ENCODE measurements at regions of chr17 and their contacts with region 1.

Region 1: DNA sequence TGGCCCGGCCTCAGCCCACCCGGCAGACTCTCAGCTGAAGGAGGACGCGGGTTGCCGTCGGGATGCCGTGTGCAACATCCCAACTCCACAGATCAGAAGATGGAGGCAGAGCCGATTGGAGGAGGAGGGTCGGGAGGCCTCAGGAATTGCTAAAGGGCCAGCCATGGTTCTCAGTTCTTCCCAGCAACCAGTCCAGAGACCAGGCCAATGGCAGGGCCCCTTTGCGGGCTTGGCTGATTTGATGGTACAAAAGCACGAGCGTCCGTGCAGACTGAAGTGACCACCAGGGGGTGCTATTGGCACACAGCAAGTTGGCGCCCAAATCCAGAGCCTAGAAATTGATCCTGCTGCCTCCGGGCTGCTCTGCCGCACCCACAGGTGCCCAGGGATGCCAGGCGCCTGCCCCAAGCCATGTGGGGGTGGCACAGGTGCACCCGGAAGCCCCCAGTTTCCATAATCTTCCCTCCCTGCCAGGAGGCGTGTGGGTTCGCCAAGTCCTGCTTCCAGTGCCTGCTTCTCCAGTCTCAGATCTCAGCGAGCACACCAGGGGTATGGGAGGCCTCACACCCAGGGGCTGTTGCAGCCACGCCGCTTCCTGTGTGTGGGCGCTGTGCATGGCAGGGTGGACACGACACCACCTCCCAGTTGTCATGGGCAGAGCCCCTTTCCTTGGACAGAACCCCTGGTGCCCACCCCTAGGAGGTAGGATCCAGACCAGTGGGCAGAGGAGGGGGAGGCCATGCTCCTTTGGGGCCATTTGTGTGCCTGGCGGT is 7.1 kb upstream of the TEX19 start:
- DNase-seq: no peak
- ATAC-seq: peak; percentile 93
- H3K4me3 ChIP-seq: no peak overlapping the region
- H3K27ac ChIP-seq: no peak overlapping the region
- H3K4me1 ChIP-seq: peaks cover 15% of the 10 kb centered on the region
- H3K27me3 ChIP-seq: no peaks in the 10 kb centered on the region
- CTCF ChIP-seq: peak; percentile 92 to 93 (median 92)
- EP300 ChIP-seq: no peak
- POLR2A ChIP-seq: no peak
- RAD21 ChIP-seq: peak; percentile 86

Region 2: GRCh38 chr17:82315703-82316358 is 36.1 kb before region 1 on chr17:
- CTCF ChIA-PET with region 1: no interaction called
- POLR2A ChIA-PET with region 1: no interaction called
- RAD21 ChIA-PET with region 1: no interaction called
- SMC1A ChIA-PET with region 1: no interaction called
- in situ Hi-C with region 1: no loop called
- intact Hi-C with region 1: no loop called
- DNase-seq: no peak
- ATAC-seq: peak; percentile 56
- H3K4me3 ChIP-seq: no peak overlapping the region
- H3K27ac ChIP-seq: no peak overlapping the region
- H3K4me1 ChIP-seq: no peaks in the 10 kb centered on the region
- H3K27me3 ChIP-seq: peaks cover 0 to 2% of the 10 kb centered on the region in 2 experiments; a peak in 2 of 4 replicates
- CTCF ChIP-seq: no peak
- EP300 ChIP-seq: no peak
- POLR2A ChIP-seq: no peak
- RAD21 ChIP-seq: no peak

Region 3: GRCh38 chr17:82338858-82339633 is 12.9 kb before region 1 on chr17:
- CTCF ChIA-PET with region 1: interaction called, 10 read pairs
- POLR2A ChIA-PET with region 1: no interaction called
- RAD21 ChIA-PET with region 1: interaction called, 3 read pairs
- SMC1A ChIA-PET with region 1: interaction called, 3 read pairs
- in situ Hi-C with region 1: no loop called
- intact Hi-C with region 1: no loop called
- DNase-seq: no peak
- ATAC-seq: no peak
- H3K4me3 ChIP-seq: no peak overlapping the region
- H3K27ac ChIP-seq: no peak overlapping the region
- H3K4me1 ChIP-seq: peaks cover 6% of the 10 kb centered on the region
- H3K27me3 ChIP-seq: peaks cover 0 to 6% of the 10 kb centered on the region in 2 experiments; a peak in 1 of 4 replicates
- CTCF ChIP-seq: no peak
- EP300 ChIP-seq: no peak
- POLR2A ChIP-seq: no peak
- RAD21 ChIP-seq: no peak

Region 4: DNA sequence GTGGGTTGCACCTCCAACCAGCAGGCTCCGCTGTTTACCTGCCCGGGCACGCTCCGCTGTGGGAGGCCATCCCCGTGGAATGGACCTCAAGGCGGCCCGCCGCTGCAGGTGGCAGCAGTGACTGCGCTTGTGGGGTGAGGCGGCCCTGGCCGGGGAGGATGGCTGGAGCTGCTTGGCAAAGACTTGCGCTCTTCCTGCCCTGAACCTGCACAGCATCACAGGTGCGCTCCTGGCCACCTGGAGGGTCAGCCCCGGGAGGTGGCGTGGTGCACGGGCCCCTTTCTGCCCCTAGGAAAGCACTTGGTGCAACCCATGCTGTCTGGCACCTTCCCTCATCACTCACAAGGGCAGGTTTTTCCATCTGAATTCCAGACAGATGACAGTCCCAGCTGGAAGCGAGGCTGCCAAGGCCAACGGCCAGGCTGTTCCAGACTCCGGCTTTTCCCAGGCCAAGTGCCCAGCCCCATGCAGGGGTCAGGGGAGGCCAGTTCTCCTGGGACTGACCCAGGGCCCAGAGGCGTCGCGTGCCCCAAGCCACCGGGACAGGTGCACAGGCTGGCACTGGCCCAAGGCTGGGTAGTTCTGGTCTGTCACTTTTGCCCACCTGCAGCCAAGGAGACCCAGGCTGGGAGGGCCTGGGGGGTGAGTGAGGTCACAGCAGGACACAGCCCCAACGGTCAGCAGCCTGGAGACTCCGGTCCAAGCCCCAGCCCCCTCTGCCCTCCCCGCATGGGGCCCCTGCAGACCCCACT is 33.0 kb after region 1 on chr17:
- CTCF ChIA-PET with region 1: no interaction called
- POLR2A ChIA-PET with region 1: no interaction called
- RAD21 ChIA-PET with region 1: no interaction called
- SMC1A ChIA-PET with region 1: no interaction called
- in situ Hi-C with region 1: no loop called
- intact Hi-C with region 1: no loop called
- DNase-seq: no peak
- ATAC-seq: no peak; the same call in 2 of the 3 replicates
- H3K4me3 ChIP-seq: no peak overlapping the region
- H3K27ac ChIP-seq: no peak overlapping the region
- H3K4me1 ChIP-seq: no peaks in the 10 kb centered on the region
- H3K27me3 ChIP-seq: no peaks in the 10 kb centered on the region
- CTCF ChIP-seq: no peak; a peak in 1 of 6 replicates
- EP300 ChIP-seq: no peak
- POLR2A ChIP-seq: no peak
- RAD21 ChIP-seq: no peak

Region 5: DNA sequence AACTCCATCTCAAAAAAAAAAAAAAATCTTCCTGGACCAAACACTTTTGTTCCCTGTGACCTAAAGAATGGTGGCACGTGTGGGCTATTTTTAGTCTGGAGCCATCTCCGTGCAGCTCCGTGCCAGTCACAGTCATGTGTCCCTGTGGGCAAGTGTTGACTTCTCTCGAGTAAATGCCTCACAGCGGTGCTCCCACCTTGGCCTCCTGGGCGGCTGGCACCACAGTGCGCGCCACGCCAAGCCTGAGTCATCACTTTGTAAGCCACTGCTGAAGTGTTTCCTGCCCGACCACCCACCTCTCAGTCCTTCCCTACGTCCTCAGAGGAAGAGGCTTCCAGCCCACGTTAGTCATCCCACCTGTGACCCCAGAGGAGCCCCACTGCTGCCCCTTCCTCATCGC is 55.4 kb after region 1 on chr17:
- CTCF ChIA-PET with region 1: interaction called, 22 read pairs
- POLR2A ChIA-PET with region 1: interaction called, 5 read pairs
- RAD21 ChIA-PET with region 1: interaction called, 6 read pairs
- SMC1A ChIA-PET with region 1: interaction called, 4 read pairs
- in situ Hi-C with region 1: loop called (anchors 5 kb)
- intact Hi-C with region 1: no loop called
- DNase-seq: no peak
- ATAC-seq: no peak
- H3K4me3 ChIP-seq: no peak overlapping the region
- H3K27ac ChIP-seq: no peak overlapping the region
- H3K4me1 ChIP-seq: peaks cover 3% of the 10 kb centered on the region; the same call in 1 of the 2 replicates
- H3K27me3 ChIP-seq: no peaks in the 10 kb centered on the region
- CTCF ChIP-seq: no peak
- EP300 ChIP-seq: no peak
- POLR2A ChIP-seq: no peak
- RAD21 ChIP-seq: no peak

Region 6: GRCh38 chr17:82418001-82418986 is 66.4 kb after region 1 on chr17 and contains the starts of genes HEXD and OGFOD3:
- CTCF ChIA-PET with region 1: interaction called, 22 read pairs
- POLR2A ChIA-PET with region 1: interaction called, 3 read pairs
- RAD21 ChIA-PET with region 1: interaction called, 5 read pairs
- SMC1A ChIA-PET with region 1: interaction called, 8 read pairs
- in situ Hi-C with region 1: no loop called
- intact Hi-C with region 1: loop called (anchors 1 kb)
- DNase-seq: no peak
- ATAC-seq: peak; percentile 86
- H3K4me3 ChIP-seq: peak within 1 kb of the TSS; percentile 97
- H3K27ac ChIP-seq: peak within 1 kb of the TSS; percentile 59
- H3K4me1 ChIP-seq: 0 out of 2 replicates have a peak, but pooled peaks cover 5% of the 10 kb centered on the region
- H3K27me3 ChIP-seq: no peaks in the 10 kb centered on the region
- CTCF ChIP-seq: no peak
- EP300 ChIP-seq: no peak; a peak in 1 of 4 replicates
- POLR2A ChIP-seq: peak; percentile 94
- RAD21 ChIP-seq: no peak
- polyA plus RNA-seq, gene HEXD: 1.6 to 1.9 TPM
- polyA plus RNA-seq, gene OGFOD3: 0.48 to 2.4 TPM

Region 7: DNA sequence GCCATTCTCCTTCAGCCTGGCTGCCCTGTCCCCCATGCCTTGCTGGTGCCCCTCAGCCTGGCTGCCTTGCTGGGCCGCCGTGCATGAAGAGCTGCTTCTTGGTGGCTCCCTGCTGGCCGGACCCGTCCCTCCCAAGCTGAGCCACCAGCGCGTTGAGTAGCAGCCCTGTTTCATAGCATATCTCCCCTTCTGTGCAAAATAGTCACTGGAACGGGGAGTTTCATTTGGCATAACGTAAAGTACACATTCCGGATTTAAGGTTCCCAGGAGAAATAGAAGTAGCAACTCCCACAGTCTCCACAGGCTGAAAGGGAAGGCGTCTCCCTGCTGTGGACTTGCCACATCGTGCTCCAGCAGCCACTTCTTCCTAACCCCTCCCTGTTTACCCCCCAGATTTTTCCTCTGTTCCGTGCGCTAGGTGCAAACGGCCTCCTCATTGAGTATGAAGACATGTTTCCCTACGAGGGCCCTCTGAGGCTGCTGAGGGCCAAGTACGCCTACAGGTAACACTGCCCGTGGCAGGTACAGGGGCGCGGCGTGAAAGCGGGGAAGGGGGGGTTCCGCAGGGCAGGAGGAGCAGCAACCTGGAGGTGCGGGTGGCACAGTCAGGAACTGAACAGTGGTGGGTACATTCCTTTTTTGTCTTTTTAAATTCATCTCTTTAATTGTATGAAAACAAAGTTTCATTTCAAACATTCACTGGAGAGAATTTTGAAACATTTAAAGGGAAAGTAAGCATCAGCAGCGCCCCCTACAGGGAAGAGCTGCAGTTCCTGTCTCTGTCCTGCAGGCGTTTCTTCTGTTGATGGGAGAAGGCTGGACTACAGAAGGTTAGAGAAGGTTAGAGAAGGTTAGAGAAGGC is 72.3 kb after region 1 on chr17:
- CTCF ChIA-PET with region 1: interaction called, 16 read pairs
- POLR2A ChIA-PET with region 1: interaction called, 3 read pairs
- RAD21 ChIA-PET with region 1: interaction called, 4 read pairs
- SMC1A ChIA-PET with region 1: interaction called, 5 read pairs
- in situ Hi-C with region 1: no loop called
- intact Hi-C with region 1: no loop called
- DNase-seq: no peak
- ATAC-seq: peak; percentile 74
- H3K4me3 ChIP-seq: no peak overlapping the region
- H3K27ac ChIP-seq: no peak overlapping the region
- H3K4me1 ChIP-seq: no peaks in the 10 kb centered on the region
- H3K27me3 ChIP-seq: no peaks in the 10 kb centered on the region
- CTCF ChIP-seq: peak; percentile 40 to 82 (median 70)
- EP300 ChIP-seq: no peak
- POLR2A ChIP-seq: no peak
- RAD21 ChIP-seq: peak; percentile 49

Region 8: GRCh38 chr17:82494236-82495055 is 142.5 kb after region 1 on chr17:
- CTCF ChIA-PET with region 1: interaction called, 4 read pairs
- POLR2A ChIA-PET with region 1: no interaction called
- RAD21 ChIA-PET with region 1: no interaction called
- SMC1A ChIA-PET with region 1: no interaction called
- in situ Hi-C with region 1: no loop called
- intact Hi-C with region 1: loop called (anchors 5 kb)
- DNase-seq: peak; percentile 89
- ATAC-seq: peak; percentile 85
- H3K4me3 ChIP-seq: peak overlapping the region; percentile 35; the same call in 1 of the 2 replicates
- H3K27ac ChIP-seq: no peak overlapping the region
- H3K4me1 ChIP-seq: peaks cover 29% of the 10 kb centered on the region
- H3K27me3 ChIP-seq: no peaks in the 10 kb centered on the region
- CTCF ChIP-seq: peak; percentile 87 to 97 (median 93)
- EP300 ChIP-seq: peak in 1 of 2 experiments; percentile 47; a peak in 1 of 4 replicates
- POLR2A ChIP-seq: no peak
- RAD21 ChIP-seq: peak; percentile 52